ENCODE measurements at regions of chr2 and their contacts with region 1.

Region 1: DNA sequence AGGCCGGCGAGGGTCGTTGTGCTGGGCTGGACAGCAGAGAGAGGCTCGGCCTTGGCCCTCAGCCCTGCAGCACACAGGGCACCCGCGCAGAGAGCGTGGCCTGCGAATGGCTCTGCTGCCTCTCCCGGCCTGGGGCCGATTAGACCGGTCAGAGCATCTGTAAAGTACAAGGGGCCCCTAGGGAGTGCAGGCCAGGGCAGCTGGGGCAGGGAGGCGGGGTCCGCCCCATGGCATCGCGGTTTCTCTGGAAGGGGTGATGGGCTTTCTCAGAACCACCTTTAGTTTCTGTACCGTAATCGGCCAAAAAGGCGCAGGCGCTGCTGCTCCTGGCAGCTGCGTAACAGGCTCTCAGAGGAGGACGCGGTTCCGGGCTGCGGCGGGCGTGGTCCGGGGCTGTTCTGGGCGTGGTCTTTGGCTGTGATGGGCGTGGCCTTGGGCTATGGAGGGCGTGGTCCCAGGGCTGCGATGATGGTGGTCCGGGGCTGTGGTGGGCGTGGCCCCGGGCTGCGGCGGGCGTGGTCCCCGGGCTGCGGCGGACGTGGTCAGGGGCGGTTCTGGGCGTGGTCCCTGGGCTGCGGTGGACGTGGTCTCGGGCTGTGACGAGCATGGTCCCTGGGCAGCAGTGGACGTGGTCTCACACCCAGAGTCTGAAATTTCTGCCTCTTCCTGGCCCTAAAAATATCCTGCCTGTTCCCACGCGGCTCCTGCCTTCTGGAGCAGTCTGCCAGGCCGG is 1.4 kb upstream of the GPR148 start:
- DNase-seq: peak; percentile 74 to 91 (median 85)
- ATAC-seq: peak; percentile 98
- H3K4me3 ChIP-seq: peak overlapping the region; percentile 86
- H3K4me3 Mint-ChIP-seq: peak overlapping the region; percentile 74 to 89 (median 86)
- H3K27ac ChIP-seq: peak overlapping the region; percentile 83
- H3K27ac Mint-ChIP-seq: peak overlapping the region; percentile 76 to 95 (median 91)
- H3K4me1 ChIP-seq: peaks cover 15 to 18% of the 10 kb centered on the region in 2 donors
- H3K4me1 Mint-ChIP-seq: peaks cover 0 to 17% (median 16%) of the 10 kb centered on the region in 7 donors
- H3K27me3 ChIP-seq: no peaks in the 10 kb centered on the region
- H3K27me3 Mint-ChIP-seq: peaks cover 0 to 13% (median 0%) of the 10 kb centered on the region in 5 donors

Region 2: GRCh38 chr2:129877289-129877779 is 850.1 kb before region 1 on chr2:
- CTCF ChIA-PET with region 1: no interaction called
- POLR2A ChIA-PET with region 1: no interaction called
- intact Hi-C with region 1: loop called in 1 of 2 experiments (anchors 10 kb)
- DNase-seq: peak; percentile 61 to 82 (median 78)
- ATAC-seq: peak; percentile 95
- H3K4me3 ChIP-seq: peak overlapping the region; percentile 96
- H3K4me3 Mint-ChIP-seq: peak overlapping the region; percentile 86 to 99 (median 96)
- H3K27ac ChIP-seq: peak overlapping the region; percentile 78
- H3K27ac Mint-ChIP-seq: peak overlapping the region; percentile 77 to 97 (median 92)
- H3K4me1 ChIP-seq: peaks cover 5 to 7% of the 10 kb centered on the region in 2 donors
- H3K4me1 Mint-ChIP-seq: peaks cover 6 to 18% (median 13%) of the 10 kb centered on the region in 7 donors
- H3K27me3 ChIP-seq: no peaks in the 10 kb centered on the region
- H3K27me3 Mint-ChIP-seq: peaks cover 0 to 2% (median 0%) of the 10 kb centered on the region in 5 donors

Region 3: GRCh38 chr2:130372055-130372832 is 355.2 kb before region 1 on chr2:
- CTCF ChIA-PET with region 1: no interaction called
- POLR2A ChIA-PET with region 1: no interaction called
- intact Hi-C with region 1: loop called in 1 of 2 experiments (anchors 10 kb)
- DNase-seq: peak; percentile 49 to 92 (median 71)
- ATAC-seq: peak; percentile 86
- H3K4me3 ChIP-seq: peak overlapping the region; percentile 83
- H3K4me3 Mint-ChIP-seq: peak overlapping the region; percentile 87 to 99 (median 94)
- H3K27ac ChIP-seq: peak overlapping the region; percentile 71
- H3K27ac Mint-ChIP-seq: peak overlapping the region; percentile 88 to 97 (median 95)
- H3K4me1 ChIP-seq: peaks cover 25 to 34% of the 10 kb centered on the region in 2 donors
- H3K4me1 Mint-ChIP-seq: peaks cover 47 to 69% (median 65%) of the 10 kb centered on the region in 7 donors
- H3K27me3 ChIP-seq: no peaks in the 10 kb centered on the region
- H3K27me3 Mint-ChIP-seq: no peaks in the 10 kb centered on the region

Region 4: DNA sequence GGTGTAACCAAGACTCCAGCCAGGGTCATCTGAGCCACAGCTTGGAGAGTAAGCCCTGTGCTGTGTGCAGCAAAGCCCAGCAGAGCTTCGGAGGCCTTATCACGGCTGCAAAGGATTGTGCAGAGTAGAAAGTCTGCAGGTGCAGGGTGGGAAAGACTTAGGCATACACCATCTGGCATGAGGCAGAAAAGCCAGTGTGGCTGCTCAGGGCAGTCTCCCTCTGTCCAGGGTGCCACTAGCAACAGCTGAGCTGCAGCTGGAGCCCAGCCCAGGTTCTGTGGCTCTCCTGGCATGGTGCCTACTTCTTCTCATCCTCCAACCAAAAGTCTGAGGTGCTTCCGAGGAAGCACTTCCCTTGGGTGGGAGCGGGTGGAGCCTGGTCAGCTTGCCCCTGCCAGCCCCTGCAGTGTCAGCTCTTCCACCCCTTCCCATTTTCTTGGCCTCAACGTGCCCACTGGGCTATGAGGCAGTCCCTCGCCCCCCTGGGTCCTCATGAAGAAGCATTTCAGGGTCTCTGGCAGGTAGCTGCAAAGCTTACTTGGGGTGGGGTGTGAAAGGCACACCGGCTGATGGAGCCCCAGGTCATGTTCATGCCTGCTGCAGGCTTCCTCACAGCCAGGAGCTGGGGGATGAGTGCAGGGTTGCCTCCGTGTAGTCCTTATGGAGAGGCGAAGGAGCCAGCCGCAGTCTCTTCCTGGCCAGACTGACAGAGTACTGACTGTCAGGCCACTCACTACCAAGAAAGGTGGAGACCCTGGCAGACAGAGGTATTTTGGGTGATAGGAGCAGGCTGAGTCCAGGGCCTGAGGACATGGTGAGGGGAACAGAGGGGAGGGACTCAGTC is 32.7 kb after region 1 on chr2:
- CTCF ChIA-PET with region 1: no interaction called
- POLR2A ChIA-PET with region 1: no interaction called
- intact Hi-C with region 1: no loop called
- DNase-seq: no peak
- ATAC-seq: no peak
- H3K4me3 ChIP-seq: no peak overlapping the region
- H3K4me3 Mint-ChIP-seq: no peak overlapping the region
- H3K27ac ChIP-seq: no peak overlapping the region
- H3K27ac Mint-ChIP-seq: no peak overlapping the region
- H3K4me1 ChIP-seq: no peaks in the 10 kb centered on the region
- H3K4me1 Mint-ChIP-seq: peaks cover 0 to 15% (median 5%) of the 10 kb centered on the region in 7 donors
- H3K27me3 ChIP-seq: peaks cover 0 to 9% of the 10 kb centered on the region in 2 donors
- H3K27me3 Mint-ChIP-seq: peaks cover 24 to 48% (median 43%) of the 10 kb centered on the region in 5 donors

Region 5: GRCh38 chr2:130824492-130825061 is 97.1 kb after region 1 on chr2:
- CTCF ChIA-PET with region 1: no interaction called
- POLR2A ChIA-PET with region 1: no interaction called
- intact Hi-C with region 1: loop called (anchors 1 to 2 kb)
- DNase-seq: peak in 7 of 9 donors; percentile 25 to 75 (median 54)
- ATAC-seq: peak; percentile 85
- H3K4me3 ChIP-seq: no peak overlapping the region
- H3K4me3 Mint-ChIP-seq: peak overlapping the region in 2 of 10 donors; percentile 24 to 60
- H3K27ac ChIP-seq: no peak overlapping the region
- H3K27ac Mint-ChIP-seq: peak overlapping the region in 7 of 9 donors; percentile 41 to 83 (median 68)
- H3K4me1 ChIP-seq: peaks cover 11 to 14% of the 10 kb centered on the region in 2 donors
- H3K4me1 Mint-ChIP-seq: peaks cover 5 to 19% (median 9%) of the 10 kb centered on the region in 7 donors
- H3K27me3 ChIP-seq: no peaks in the 10 kb centered on the region
- H3K27me3 Mint-ChIP-seq: peaks cover 0 to 15% (median 0%) of the 10 kb centered on the region in 5 donors

Region 6: GRCh38 chr2:130951018-130951417 is 223.6 kb after region 1 on chr2:
- CTCF ChIA-PET with region 1: no interaction called
- POLR2A ChIA-PET with region 1: no interaction called
- intact Hi-C with region 1: no loop called
- DNase-seq: no peak
- ATAC-seq: no peak
- H3K4me3 ChIP-seq: no peak overlapping the region
- H3K4me3 Mint-ChIP-seq: no peak overlapping the region
- H3K27ac ChIP-seq: no peak overlapping the region
- H3K27ac Mint-ChIP-seq: no peak overlapping the region
- H3K4me1 ChIP-seq: no peaks in the 10 kb centered on the region
- H3K4me1 Mint-ChIP-seq: peaks cover 0 to 9% (median 0%) of the 10 kb centered on the region in 7 donors
- H3K27me3 ChIP-seq: no peaks in the 10 kb centered on the region
- H3K27me3 Mint-ChIP-seq: peaks cover 4 to 27% (median 13%) of the 10 kb centered on the region in 5 donors

Region 7: GRCh38 chr2:131093006-131093695 is 365.7 kb after region 1 on chr2 and contains the start of gene FAM168B:
- CTCF ChIA-PET with region 1: no interaction called
- POLR2A ChIA-PET with region 1: no interaction called
- intact Hi-C with region 1: loop called (anchors 1 to 2 kb)
- DNase-seq: peak; percentile 82 to 96 (median 92)
- ATAC-seq: peak; percentile 92
- H3K4me3 ChIP-seq: peak within 1 kb of the TSS; percentile 81
- H3K4me3 Mint-ChIP-seq: peak within 1 kb of the TSS; percentile 82 to 98 (median 94)
- H3K27ac ChIP-seq: peak within 1 kb of the TSS; percentile 99
- H3K27ac Mint-ChIP-seq: peak within 1 kb of the TSS; percentile 88 to 97 (median 96)
- H3K4me1 ChIP-seq: peaks cover 0 to 12% of the 10 kb centered on the region in 2 donors
- H3K4me1 Mint-ChIP-seq: peaks cover 7 to 37% (median 24%) of the 10 kb centered on the region in 7 donors
- H3K27me3 ChIP-seq: no peaks in the 10 kb centered on the region
- H3K27me3 Mint-ChIP-seq: no peaks in the 10 kb centered on the region
- total RNA-seq, gene FAM168B: 50.5 to 82.9 (median 66.7) TPM

Region 8: DNA sequence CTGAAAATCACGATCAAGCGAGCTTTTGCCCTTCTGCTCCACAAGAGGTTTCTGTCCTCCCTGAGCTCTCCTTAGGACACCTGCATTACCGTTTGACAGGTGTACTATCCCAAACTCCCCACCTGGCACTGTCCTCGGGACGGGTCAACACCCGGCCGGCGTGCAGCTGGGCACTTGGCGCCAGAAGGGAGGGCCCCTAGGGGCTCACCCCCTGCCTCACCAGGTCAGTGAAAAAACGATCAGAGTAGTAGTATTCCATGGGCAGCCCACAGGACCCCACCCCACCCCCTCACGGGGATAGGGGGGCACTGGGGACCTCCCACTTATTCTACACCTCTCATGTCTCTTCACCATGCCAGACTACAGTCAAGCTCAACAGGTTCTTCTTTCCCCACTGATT is 1551.9 kb after region 1 on chr2:
- CTCF ChIA-PET with region 1: no interaction called
- POLR2A ChIA-PET with region 1: no interaction called
- intact Hi-C with region 1: no loop called
- DNase-seq: no peak
- ATAC-seq: no peak
- H3K4me3 ChIP-seq: no peak overlapping the region
- H3K4me3 Mint-ChIP-seq: no peak overlapping the region
- H3K27ac ChIP-seq: no peak overlapping the region
- H3K27ac Mint-ChIP-seq: no peak overlapping the region
- H3K4me1 ChIP-seq: no peaks in the 10 kb centered on the region
- H3K4me1 Mint-ChIP-seq: no peaks in the 10 kb centered on the region
- H3K27me3 ChIP-seq: no peaks in the 10 kb centered on the region
- H3K27me3 Mint-ChIP-seq: peaks cover 0 to 12% (median 5%) of the 10 kb centered on the region in 5 donors